HEK293 (cell line): ENCODE measurements at regions of chr1 and their contacts with region 1.

Region 1: GRCh38 chr1:156689035-156689952 is 12.1 kb upstream of the NES start:
- H3K4me3 ChIP-seq: peak overlapping the region; percentile 36
- H3K27ac ChIP-seq: no peak overlapping the region
- H3K4me1 ChIP-seq: peaks cover 16% of the 10 kb centered on the region
- CTCF ChIP-seq: peak; percentile 94

Region 2: DNA sequence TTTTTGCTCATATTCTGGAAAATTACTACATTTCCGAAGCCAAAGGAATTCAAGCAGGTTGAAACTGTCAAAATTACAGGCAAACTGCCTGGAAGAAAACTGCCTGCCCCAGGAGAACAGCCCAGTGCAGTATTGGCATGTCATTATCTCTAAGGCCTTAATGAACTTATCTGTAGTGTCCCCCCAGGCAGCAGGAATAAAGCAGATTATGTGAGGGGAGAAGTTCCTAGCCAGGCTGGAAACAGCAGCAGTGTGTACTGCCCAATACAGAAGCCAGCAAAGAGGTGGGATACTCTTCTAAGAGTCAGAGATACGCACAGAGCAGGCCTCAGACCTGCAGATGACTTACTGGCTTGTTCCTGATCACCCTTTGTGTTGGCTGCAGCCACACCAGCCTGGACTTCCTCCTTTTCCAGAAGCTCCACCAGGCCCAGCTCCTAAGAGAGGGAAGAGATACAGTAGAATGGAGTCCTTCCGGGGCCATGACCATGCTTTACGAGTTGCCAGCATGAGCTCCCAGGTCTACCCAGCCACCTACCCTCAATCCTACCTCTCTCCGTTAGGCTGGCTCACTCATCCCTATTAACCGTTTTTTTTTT is 128.6 kb before region 1 on chr1:
- CTCF ChIA-PET with region 1: no interaction called
- POLR2A ChIA-PET with region 1: no interaction called
- H3K4me3 ChIP-seq: no peak overlapping the region
- H3K27ac ChIP-seq: no peak overlapping the region
- H3K4me1 ChIP-seq: no peaks in the 10 kb centered on the region
- CTCF ChIP-seq: no peak

Region 3: GRCh38 chr1:156625436-156626078 is 63.7 kb before region 1 on chr1:
- CTCF ChIA-PET with region 1: interaction called, 235 read pairs
- POLR2A ChIA-PET with region 1: interaction called, 7 read pairs
- H3K4me3 ChIP-seq: peak overlapping the region; percentile 26
- H3K27ac ChIP-seq: no peak overlapping the region; the same call in 1 of the 2 replicates
- H3K4me1 ChIP-seq: no peaks in the 10 kb centered on the region
- CTCF ChIP-seq: peak; percentile 88

Region 4: DNA sequence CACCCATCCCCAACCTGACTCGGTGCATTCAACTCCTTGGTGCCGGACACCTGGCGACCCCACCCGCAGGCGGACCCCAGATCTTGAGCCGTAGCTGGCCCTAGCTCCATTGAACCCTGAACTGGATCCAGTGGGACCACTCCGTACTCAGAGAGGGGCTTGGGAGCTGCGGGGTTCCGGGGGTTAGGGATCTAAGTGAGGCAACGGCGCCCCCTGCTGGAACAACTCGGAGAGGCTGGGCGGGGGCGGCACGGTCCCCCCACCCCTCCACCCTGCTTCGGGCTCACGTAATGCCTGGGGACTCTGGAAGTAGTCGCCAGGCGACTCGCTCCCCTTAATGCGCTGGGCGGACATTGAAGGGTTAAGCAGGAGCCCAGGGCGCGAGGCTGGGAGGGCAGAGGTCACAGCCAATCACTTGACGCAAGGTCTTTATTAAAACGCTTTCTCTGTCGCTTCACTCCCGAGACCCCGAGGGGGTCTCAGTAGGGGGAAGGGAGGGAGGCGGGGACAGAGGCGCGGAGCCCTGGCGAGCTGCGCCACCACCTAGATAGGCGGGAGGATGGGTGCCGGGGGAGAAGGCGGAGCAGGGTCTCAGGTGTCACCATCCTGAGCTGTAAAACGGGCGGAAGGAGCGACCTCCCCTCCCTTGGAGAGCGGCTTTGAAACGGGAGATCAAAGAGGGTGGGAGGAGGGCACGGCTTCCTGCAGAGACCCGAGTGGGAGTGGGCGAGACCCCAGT is 16.8 kb after region 1 on chr1:
- CTCF ChIA-PET with region 1: interaction called, 579 read pairs
- POLR2A ChIA-PET with region 1: interaction called, 43 read pairs
- H3K4me3 ChIP-seq: peak overlapping the region; percentile 36
- H3K27ac ChIP-seq: peak overlapping the region; percentile 39; the same call in 1 of the 2 replicates
- H3K4me1 ChIP-seq: peaks cover 12% of the 10 kb centered on the region
- CTCF ChIP-seq: peak; percentile 92

Region 5: DNA sequence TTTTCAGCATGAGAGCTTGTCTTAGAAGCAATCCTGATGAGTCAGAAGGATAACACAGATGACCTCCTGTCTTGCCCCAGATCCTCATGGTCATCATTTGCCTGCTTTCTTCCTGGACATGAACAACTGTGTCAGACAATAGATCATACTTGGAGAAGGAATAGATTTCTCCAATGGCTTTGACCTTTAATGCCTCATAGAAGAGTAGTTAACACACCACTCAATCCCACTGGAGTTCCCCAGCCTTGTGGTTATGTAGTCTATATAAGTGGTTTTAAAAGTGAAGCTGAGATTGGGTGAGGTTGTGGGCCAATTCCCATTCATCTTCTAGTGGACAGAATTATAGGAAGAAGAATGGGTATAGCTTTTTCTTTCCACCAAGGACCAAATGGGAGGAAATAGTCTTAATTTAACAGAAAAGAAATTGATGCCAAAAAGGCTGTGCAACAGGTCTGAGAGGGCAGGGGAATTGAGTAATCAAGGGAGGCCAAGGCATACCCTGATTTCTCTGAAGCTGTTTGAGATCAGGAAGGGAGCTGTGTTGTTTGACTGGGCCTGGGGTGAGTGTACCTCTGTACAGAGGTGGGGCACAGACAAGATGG is 92.4 kb after region 1 on chr1:
- CTCF ChIA-PET with region 1: interaction called, 18 read pairs
- POLR2A ChIA-PET with region 1: no interaction called
- H3K4me3 ChIP-seq: no peak overlapping the region
- H3K27ac ChIP-seq: no peak overlapping the region
- H3K4me1 ChIP-seq: 0 out of 2 replicates have a peak, but pooled peaks cover 4% of the 10 kb centered on the region
- CTCF ChIP-seq: no peak

Region 6: GRCh38 chr1:156838981-156839410 is 149.7 kb after region 1 on chr1:
- CTCF ChIA-PET with region 1: interaction called, 23 read pairs
- POLR2A ChIA-PET with region 1: no interaction called
- H3K4me3 ChIP-seq: no peak overlapping the region
- H3K27ac ChIP-seq: no peak overlapping the region
- H3K4me1 ChIP-seq: no peaks in the 10 kb centered on the region
- CTCF ChIP-seq: peak; percentile 78; the same call in 1 of the 2 replicates

Region 7: GRCh38 chr1:156920233-156921052 is 231.1 kb after region 1 on chr1 and contains the start of gene LRRC71:
- CTCF ChIA-PET with region 1: interaction called, 43 read pairs
- POLR2A ChIA-PET with region 1: no interaction called
- H3K4me3 ChIP-seq: no peak within 1 kb of the TSS
- H3K27ac ChIP-seq: no peak within 1 kb of the TSS
- H3K4me1 ChIP-seq: no peaks in the 10 kb centered on the region
- CTCF ChIP-seq: peak; percentile 88